Activated T-helper 1 cell treated with anti-CD3 and anti-CD28 coated beads, Interleukin-12 subunit alpha, Interleukin-12 subunit beta, Interleukin-2, Interleukin-4 antibody, amounts not matched to agents 30 ng/mL and 10 ng/mL and 1 ng/mL, durations not matched to agents 14 hours and 24 hours and 36 hours (primary cell): ENCODE measurements at regions of chr6 and their contacts with region 1.

Region 1: GRCh38 chr6:137218917-137219663 is at the start of gene IFNGR1:
- DNase-seq: peak; percentile 94
- H3K4me3 Mint-ChIP-seq: peak within 1 kb of the TSS; percentile 100
- H3K27ac Mint-ChIP-seq: peak within 1 kb of the TSS; percentile 100
- H3K4me1 Mint-ChIP-seq: peaks cover 56% of the 10 kb centered on the region
- H3K27me3 Mint-ChIP-seq: peaks cover 4% of the 10 kb centered on the region
- total RNA-seq, gene IFNGR1: 12.5 and 12.6 TPM in 2 replicates

Region 2: DNA sequence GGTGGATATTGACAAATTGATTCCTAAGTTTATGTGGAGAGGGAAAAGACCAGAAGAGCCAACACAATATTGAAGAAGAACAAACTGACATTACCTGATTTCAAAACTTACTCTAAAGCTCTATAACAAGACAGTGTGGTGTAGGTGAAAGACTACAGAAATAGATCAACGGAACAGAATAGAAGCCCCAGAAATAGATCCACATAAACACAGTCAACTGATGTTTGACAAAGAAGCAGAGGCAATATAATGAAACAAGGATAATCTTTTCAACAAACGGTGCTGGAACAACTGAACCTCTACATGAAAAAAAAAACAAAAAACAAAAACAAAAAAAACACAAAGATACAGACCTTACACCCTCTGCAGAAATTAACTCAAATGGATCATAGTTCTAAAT is 477.0 kb before region 1 on chr6:
- intact Hi-C with region 1: no loop called
- DNase-seq: no peak
- H3K4me3 Mint-ChIP-seq: no peak overlapping the region
- H3K27ac Mint-ChIP-seq: no peak overlapping the region
- H3K4me1 Mint-ChIP-seq: peaks cover 71% of the 10 kb centered on the region
- H3K27me3 Mint-ChIP-seq: no peaks in the 10 kb centered on the region

Region 3: DNA sequence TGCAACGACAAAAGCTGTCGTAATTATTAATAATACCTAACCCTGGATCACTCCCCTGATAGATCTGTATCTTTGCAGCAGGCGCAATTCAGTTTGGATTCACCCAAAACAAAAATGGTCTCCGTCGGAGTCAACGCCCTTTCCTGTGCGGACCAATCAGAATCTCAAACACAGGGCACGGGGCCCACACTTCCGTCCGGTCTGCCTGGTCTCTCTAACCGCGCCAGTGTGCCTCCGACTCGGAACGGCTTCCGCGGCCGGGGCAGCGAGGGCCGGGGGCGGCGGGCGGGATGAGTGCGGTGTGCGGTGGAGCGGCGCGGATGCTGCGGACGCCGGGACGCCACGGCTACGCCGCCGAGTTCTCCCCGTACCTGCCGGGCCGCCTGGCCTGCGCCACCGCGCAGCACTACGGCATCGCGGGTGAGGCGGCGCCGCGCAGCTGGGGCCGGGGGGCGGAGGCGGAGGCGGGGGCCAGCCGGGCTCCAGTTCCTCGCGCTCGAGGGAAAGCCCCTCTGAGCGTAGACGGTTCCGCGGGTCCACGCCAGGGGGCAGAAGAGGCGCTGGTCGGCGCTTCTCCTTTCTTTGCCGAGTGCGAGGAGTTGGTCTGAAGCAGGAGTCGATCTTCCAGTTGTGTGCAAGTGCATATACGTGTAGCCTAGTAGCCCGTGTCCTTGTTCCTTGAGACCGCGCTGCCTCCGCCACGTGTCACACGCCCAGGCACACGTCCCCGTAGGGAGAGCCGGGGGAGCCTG is 396.5 kb before region 1 on chr6 and contains the start of gene PEX7:
- intact Hi-C with region 1: loop called (anchors 5 kb)
- DNase-seq: peak; percentile 85
- H3K4me3 Mint-ChIP-seq: peak within 1 kb of the TSS; percentile 91
- H3K27ac Mint-ChIP-seq: peak within 1 kb of the TSS; percentile 92
- H3K4me1 Mint-ChIP-seq: peaks cover 12% of the 10 kb centered on the region
- H3K27me3 Mint-ChIP-seq: peaks cover 6% of the 10 kb centered on the region
- total RNA-seq, gene PEX7: 3.7 and 4.2 TPM in 2 replicates

Region 4: DNA sequence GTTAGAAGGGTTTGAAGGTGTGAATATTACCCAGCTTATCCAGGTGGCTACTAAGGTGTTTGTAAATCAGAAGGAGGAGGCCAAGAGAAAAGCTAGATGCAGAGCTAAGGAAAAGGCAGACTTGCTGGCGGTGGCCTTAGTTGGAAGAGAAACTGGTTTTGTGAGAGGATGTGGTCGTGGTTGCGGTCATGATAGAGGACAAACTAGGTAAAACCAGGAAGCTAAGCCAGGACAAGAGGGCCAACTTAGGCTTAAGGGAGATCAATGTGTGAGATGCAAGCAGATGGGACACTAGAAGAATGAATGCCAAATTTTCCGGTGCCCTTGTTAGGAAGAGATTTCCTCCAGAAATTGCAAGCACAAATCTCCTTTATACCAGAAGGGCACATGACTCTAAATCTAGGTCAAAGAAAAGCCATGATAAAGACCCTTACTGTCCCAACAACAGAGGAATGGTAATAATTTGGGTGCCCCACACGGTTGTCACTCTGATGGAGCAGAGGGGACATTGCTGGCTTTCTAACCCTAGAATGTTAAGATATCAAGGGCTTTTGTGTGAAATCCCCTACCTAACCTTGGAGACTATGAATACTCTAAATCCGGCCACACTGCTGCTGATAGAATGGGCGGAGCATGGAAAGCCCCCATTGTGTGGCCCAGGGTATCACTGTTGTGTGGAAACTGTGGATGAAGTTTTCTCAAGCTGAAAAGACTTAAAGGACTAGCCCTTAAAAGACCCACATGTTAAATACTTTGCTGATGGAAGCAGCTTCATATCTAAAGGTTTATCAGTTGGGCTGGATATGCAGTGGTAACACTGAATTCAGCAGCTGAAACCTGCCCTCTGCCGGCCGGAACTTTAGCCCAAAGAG is 53.5 kb before region 1 on chr6:
- intact Hi-C with region 1: loop called (anchors 2 kb)
- DNase-seq: peak; percentile 59
- H3K4me3 Mint-ChIP-seq: peak overlapping the region; percentile 30
- H3K27ac Mint-ChIP-seq: peak overlapping the region; percentile 64
- H3K4me1 Mint-ChIP-seq: peaks cover 59% of the 10 kb centered on the region
- H3K27me3 Mint-ChIP-seq: no peaks in the 10 kb centered on the region

Region 5: GRCh38 chr6:137191670-137192069 is 27.4 kb before region 1 on chr6:
- intact Hi-C with region 1: no loop called
- DNase-seq: no peak
- H3K4me3 Mint-ChIP-seq: no peak overlapping the region
- H3K27ac Mint-ChIP-seq: no peak overlapping the region
- H3K4me1 Mint-ChIP-seq: peaks cover 12% of the 10 kb centered on the region
- H3K27me3 Mint-ChIP-seq: peaks cover 2% of the 10 kb centered on the region

Region 6: GRCh38 chr6:137271245-137272183 is 52.4 kb after region 1 on chr6:
- intact Hi-C with region 1: loop called (anchors 2 kb)
- DNase-seq: no peak
- H3K4me3 Mint-ChIP-seq: no peak overlapping the region
- H3K27ac Mint-ChIP-seq: no peak overlapping the region
- H3K4me1 Mint-ChIP-seq: peaks cover 13% of the 10 kb centered on the region
- H3K27me3 Mint-ChIP-seq: peaks cover 31% of the 10 kb centered on the region

Region 7: DNA sequence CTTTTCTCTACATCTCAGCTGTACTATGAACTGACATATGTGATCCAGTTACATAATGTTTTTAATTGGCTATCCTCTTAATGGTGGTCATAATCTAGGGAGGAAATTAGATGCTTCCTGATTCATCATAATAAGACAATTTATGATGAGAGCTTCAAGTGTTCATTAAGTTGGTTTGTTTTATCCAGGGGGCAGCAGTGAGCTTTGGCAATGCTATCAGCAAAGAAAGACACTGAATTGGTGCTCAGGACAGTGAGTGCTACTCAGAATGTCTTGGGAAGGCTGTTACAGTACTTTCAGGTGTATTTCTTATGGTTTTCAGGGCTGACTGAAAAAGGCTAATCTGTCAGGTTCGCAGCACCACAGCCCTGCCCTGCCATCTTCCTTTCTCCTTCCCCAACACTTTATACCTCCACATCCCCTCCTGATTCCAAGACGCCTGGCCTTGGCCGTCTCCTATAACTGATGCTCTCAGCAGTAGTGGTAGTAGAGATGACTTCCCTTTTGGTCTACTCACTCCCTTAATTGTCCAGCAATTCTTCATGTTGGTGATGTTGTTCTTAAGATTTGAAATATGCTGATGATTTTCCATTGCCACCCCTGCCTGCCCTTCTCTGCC is 581.0 kb after region 1 on chr6:
- intact Hi-C with region 1: loop called (anchors 10 kb)
- DNase-seq: peak; percentile 35
- H3K4me3 Mint-ChIP-seq: no peak overlapping the region
- H3K27ac Mint-ChIP-seq: peak overlapping the region; percentile 14
- H3K4me1 Mint-ChIP-seq: peaks cover 67% of the 10 kb centered on the region
- H3K27me3 Mint-ChIP-seq: no peaks in the 10 kb centered on the region